ENCODE measurements at regions of chr17 and their contacts with region 1.

Region 1: GRCh38 chr17:36534840-36535668 is at the starts of genes MYO19 and PIGW:
- DNase-seq: peak; percentile 91
- ATAC-seq: peak; percentile 86
- H3K4me3 Mint-ChIP-seq: peak within 1 kb of the TSS; percentile 93
- H3K27ac Mint-ChIP-seq: peak within 1 kb of the TSS; percentile 99
- H3K4me1 Mint-ChIP-seq: peaks cover 44% of the 10 kb centered on the region
- H3K27me3 Mint-ChIP-seq: no peaks in the 10 kb centered on the region
- total RNA-seq, gene MYO19: 140 to 161 TPM
- total RNA-seq, gene PIGW: 9.6 to 17.4 TPM

Region 2: DNA sequence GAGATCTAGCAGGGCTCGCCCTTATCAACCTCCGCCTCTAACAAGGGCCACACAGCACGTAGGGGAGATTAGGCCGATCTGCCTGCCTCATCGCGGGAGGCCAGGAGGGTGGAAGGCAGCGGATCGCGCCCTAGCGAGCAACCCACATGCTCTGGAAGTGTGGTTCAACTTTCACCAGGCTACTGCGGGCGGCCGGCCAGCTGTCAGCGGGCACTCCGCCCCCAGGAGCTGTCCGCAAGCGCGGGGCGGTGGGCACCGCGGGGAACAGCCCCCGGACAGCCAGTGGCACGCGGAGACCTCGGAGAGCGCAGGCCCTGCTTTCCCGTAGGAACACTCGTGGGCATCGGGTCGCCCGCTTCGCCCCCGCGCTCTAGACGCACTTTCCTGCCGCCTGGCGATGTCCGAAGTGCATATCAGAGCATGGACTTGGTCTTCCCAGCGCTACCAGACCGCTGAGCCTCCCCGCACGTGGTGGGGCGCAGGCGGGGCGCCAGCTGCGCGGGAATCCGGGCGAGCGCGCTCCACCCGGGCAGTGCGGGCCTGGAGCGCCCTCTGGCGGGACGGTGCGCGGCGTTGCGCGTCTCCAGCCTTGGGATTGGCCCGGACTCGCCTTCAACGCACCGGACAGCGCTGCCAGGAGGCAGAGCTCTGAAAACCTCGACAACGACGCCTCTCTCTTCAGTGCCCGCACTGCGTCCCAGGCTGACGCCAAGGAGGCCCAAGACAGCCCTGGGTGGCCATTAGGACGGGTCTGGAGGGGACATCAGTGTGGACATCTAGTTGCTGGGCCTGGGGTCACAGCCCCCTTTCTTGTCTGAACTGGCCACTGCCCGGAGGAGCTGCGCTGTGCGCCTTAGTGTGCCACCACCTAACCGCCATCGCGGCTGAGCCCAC is 52.2 kb before region 1 on chr17:
- CTCF ChIA-PET with region 1: interaction called, 17 read pairs
- DNase-seq: peak; percentile 87
- ATAC-seq: peak; percentile 74
- H3K4me3 Mint-ChIP-seq: no peak overlapping the region
- H3K27ac Mint-ChIP-seq: no peak overlapping the region
- H3K4me1 Mint-ChIP-seq: peaks cover 28% of the 10 kb centered on the region
- H3K27me3 Mint-ChIP-seq: peaks cover 27% of the 10 kb centered on the region

Region 3: GRCh38 chr17:36496018-36496789 is 38.9 kb before region 1 on chr17:
- CTCF ChIA-PET with region 1: no interaction called
- DNase-seq: no peak
- ATAC-seq: no peak
- H3K4me3 Mint-ChIP-seq: no peak overlapping the region
- H3K27ac Mint-ChIP-seq: no peak overlapping the region
- H3K4me1 Mint-ChIP-seq: no peaks in the 10 kb centered on the region
- H3K27me3 Mint-ChIP-seq: no peaks in the 10 kb centered on the region

Region 4: GRCh38 chr17:36510636-36511035 is 24.4 kb before region 1 on chr17:
- CTCF ChIA-PET with region 1: no interaction called
- DNase-seq: no peak
- ATAC-seq: no peak
- H3K4me3 Mint-ChIP-seq: no peak overlapping the region
- H3K27ac Mint-ChIP-seq: no peak overlapping the region
- H3K4me1 Mint-ChIP-seq: no peaks in the 10 kb centered on the region
- H3K27me3 Mint-ChIP-seq: no peaks in the 10 kb centered on the region

Region 5: DNA sequence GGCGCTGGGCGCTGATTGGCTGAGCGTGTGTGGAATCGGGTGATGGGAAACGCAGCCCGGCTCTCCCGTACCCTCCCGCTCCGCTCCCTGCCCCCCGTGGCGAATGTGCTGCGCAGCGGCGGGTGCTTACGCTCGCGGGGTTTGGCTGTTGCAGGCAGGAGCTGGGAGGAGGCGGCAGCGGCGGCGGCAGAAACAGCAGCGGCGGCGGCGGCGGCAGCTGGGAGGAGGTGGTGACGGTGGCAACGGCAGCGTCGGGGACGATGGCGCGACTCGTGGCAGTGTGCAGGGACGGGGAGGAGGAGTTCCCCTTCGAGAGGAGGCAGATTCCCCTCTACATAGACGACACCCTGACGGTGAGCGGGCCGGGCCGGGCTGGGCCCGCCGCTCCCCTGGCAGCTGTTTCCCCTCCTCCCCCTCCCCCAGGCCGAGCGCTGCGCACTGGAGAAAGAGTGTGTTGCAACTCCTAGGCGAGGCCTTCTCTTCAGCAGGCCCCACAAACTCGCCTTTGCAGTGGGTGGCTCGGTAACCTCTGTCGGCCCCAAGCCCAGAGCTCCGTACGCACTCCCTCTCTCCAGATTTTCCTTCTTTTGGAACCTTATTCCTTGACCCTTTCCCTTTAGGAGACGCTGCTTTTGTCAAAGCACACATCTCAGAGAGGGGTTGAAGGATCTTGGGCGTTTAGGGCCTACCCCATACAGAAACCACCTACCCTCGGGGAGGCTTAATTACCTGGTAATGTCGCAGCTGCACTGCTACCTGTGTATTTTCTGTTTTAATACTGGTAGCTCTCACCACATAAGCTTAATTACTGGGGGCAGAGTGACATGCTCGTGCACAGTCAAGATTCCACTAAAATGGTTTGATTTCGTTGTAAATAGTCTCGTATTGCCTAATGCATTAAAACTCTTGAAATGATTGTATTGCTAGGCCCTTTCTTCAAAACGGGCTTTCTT is 10.7 kb after region 1 on chr17:
- CTCF ChIA-PET with region 1: interaction called, 48 read pairs
- DNase-seq: peak; percentile 98
- ATAC-seq: peak; percentile 81
- H3K4me3 Mint-ChIP-seq: peak overlapping the region; percentile 100
- H3K27ac Mint-ChIP-seq: peak overlapping the region; percentile 96
- H3K4me1 Mint-ChIP-seq: peaks cover 37% of the 10 kb centered on the region
- H3K27me3 Mint-ChIP-seq: no peaks in the 10 kb centered on the region

Measured in activated CD8-positive, alpha-beta memory T cell treated with anti-CD3 and anti-CD28 coated beads, Interleukin-2, amount 10 ng/mL, durations not matched to agents 7 days and 5 days (primary cell).